RWPE1 (cell line): ENCODE measurements at regions of chr13 and their contacts with region 1.

Region 1: GRCh38 chr13:95834134-95834765 is 157.3 kb downstream of the DNAJC3 start:
- DNase-seq: peak; percentile 70
- H3K27ac ChIP-seq: no peak overlapping the region
- CTCF ChIP-seq: peak; percentile 92

Region 2: DNA sequence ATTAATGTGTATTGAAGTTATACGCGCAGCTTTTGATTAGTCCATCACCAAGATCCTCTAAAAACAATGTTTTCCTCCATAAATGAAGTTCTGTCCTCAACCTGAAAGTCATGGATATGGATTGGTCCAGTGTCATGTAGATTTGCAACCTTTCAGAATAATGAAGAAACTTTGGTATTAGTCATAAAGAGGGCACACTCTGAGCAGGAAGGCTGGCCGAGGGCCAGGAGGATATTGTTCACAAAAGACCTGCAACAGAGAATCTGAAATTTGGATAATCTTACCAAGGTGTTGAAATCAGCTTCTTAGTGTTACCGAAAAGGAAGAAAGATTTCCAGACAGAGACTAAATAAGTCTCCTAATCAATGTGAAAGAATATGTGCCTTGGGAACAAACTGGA is 261.0 kb before region 1 on chr13:
- CTCF ChIA-PET with region 1: no interaction called
- POLR2A ChIA-PET with region 1: no interaction called
- DNase-seq: peak; percentile 64
- H3K27ac ChIP-seq: no peak overlapping the region
- CTCF ChIP-seq: no peak

Region 3: DNA sequence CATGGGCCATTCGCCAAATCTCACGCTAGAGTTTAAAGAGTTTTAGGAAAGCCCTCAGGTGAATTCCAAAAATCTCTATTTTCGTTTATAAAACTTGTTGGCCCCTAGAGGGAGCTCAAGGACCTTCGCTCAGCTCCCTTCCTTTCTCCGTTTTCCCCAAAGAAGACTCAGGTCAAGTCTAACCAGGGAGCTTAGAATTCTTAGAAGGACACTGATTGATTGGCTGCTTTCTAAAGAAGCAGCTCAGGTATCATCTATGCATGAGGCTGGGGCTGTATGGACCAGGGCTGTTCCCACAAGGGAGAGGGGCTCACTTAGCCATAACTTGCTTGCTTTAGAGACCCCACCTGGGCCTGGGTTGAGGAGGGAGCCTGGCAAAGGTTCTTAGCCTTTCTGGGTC is 210.2 kb before region 1 on chr13:
- CTCF ChIA-PET with region 1: interaction called, 14 read pairs
- POLR2A ChIA-PET with region 1: no interaction called
- DNase-seq: peak; percentile 42
- H3K27ac ChIP-seq: no peak overlapping the region
- CTCF ChIP-seq: peak; percentile 74